Activated T-helper 1 cell treated with anti-CD3 and anti-CD28 coated beads, Interleukin-12 subunit alpha, Interleukin-12 subunit beta, Interleukin-2, Interleukin-4 antibody, amounts not matched to agents 30 ng/mL and 10 ng/mL and 1 ng/mL, durations not matched to agents 14 hours and 24 hours and 36 hours (primary cell): ENCODE measurements at regions of chr21 and their contacts with region 1.

Region 1: GRCh38 chr21:34008618-34009017 is 64.8 kb upstream of the MRPS6 start:
- DNase-seq: no peak
- H3K4me3 Mint-ChIP-seq: no peak overlapping the region
- H3K27ac Mint-ChIP-seq: peak overlapping the region; percentile 50
- H3K4me1 Mint-ChIP-seq: peaks cover 22% of the 10 kb centered on the region
- H3K27me3 Mint-ChIP-seq: no peaks in the 10 kb centered on the region

Region 2: GRCh38 chr21:33968080-33968994 is 40.3 kb before region 1 on chr21:
- intact Hi-C with region 1: no loop called
- DNase-seq: no peak
- H3K4me3 Mint-ChIP-seq: no peak overlapping the region
- H3K27ac Mint-ChIP-seq: no peak overlapping the region
- H3K4me1 Mint-ChIP-seq: peaks cover 30% of the 10 kb centered on the region
- H3K27me3 Mint-ChIP-seq: no peaks in the 10 kb centered on the region

Region 3: GRCh38 chr21:34020005-34020847 is 11.6 kb after region 1 on chr21:
- intact Hi-C with region 1: loop called (anchors 2 kb)
- DNase-seq: no peak
- H3K4me3 Mint-ChIP-seq: peak overlapping the region; percentile 38
- H3K27ac Mint-ChIP-seq: peak overlapping the region; percentile 59
- H3K4me1 Mint-ChIP-seq: peaks cover 26% of the 10 kb centered on the region
- H3K27me3 Mint-ChIP-seq: no peaks in the 10 kb centered on the region